Psoas muscle (tissue), 8 donors: ENCODE measurements at regions of chr16 and their contacts with region 1.

Region 1: GRCh38 chr16:10181196-10182162 is 749 bp downstream of the GRIN2A start:
- DNase-seq: peak; percentile 54 to 61
- ATAC-seq: peak; percentile 64 to 81 (median 72)
- H3K4me3 ChIP-seq: peak overlapping the region; percentile 35
- H3K27ac ChIP-seq: no peak overlapping the region
- H3K4me1 ChIP-seq: peaks cover 8% of the 10 kb centered on the region
- H3K27me3 ChIP-seq: peaks cover 0 to 66% (median 24%) of the 10 kb centered on the region in 3 donors
- CTCF ChIP-seq: peak; percentile 78

Region 2: DNA sequence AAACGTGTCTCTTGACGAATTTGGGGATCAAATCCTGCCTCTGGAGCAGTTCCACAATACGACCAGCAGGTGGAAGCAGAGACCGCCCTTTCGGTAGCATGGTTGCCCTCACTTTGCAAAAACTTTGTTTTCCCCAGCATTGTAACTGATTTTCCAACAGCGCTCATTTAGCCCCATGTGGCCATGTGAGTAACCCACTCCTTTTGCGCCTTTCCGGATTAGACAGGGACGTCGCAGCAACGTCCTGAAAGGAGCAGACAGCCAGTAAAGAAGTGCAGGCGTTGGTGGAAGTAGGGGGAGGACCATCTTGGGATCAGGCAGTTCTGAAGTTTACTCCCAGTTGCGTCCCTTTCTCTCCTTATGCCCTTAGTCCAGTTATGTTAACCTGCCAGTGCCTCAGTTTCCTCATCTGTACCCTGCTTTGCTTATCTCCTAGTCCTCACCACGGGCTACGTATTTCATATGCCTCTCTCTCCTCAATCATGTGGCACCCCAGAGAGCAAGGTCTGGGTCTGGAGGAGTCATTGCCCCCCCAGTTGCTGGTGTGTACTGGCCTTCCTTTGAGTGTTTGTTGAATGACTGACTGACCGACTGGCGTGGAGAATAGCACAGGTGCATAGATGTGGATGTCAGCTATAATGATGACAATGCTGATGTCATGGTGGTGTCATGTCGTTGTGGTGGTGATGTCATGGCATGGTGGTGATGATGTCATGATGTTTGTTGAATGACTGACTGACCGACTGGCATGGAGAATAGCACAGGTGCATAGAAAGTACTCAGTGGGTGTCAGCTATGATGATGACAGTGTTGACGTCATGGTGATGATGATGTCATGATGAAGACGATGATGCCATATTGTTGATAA is 1613.5 kb before region 1 on chr16:
- intact Hi-C with region 1: loop called in 1 of 2 experiments (anchors 10 kb)
- DNase-seq: peak; percentile 61 to 70
- ATAC-seq: peak; percentile 67 to 88 (median 84)
- H3K4me3 ChIP-seq: no peak overlapping the region
- H3K27ac ChIP-seq: no peak overlapping the region
- H3K4me1 ChIP-seq: no peaks in the 10 kb centered on the region
- H3K27me3 ChIP-seq: peaks cover 0 to 29% (median 5%) of the 10 kb centered on the region in 3 donors
- CTCF ChIP-seq: peak; percentile 96

Region 3: DNA sequence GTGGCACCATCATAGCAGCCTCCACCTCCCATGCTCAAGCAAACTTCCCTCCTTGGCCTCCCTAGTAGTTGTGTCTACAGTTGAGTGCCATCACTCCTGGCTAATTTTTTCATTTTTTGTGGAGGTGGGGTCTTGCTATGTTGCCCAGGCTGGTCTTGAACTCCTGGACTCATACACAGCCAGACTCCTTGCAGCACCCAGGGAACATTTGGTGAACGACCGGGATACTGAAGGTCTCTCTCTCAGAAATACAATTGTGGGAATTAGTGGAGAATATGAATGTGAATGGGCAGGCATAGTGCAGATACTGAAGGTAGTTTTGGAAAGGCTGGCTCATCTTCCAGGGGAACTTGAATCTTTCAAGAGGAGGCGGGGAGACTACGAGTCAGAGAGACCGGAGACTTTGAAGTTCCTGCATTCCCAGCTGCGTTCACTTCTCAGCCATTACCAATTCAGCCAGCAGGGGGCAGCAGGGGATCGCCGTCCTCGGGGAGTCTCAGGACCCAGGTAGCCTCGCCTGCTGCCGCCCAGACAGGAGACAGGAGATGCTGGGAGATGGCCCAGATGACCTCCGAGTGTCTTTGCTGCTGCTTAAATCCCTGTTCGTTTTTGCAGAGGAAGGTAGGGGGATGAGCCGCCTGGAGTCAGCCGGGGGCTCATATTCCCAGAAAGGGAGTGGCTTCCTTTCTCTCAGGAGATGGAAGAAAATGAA is 1021.5 kb before region 1 on chr16:
- intact Hi-C with region 1: loop called in 1 of 2 experiments (anchors 5 kb)
- DNase-seq: no peak
- ATAC-seq: peak in 1 of 4 donors; percentile 53
- H3K4me3 ChIP-seq: no peak overlapping the region
- H3K27ac ChIP-seq: no peak overlapping the region
- H3K4me1 ChIP-seq: no peaks in the 10 kb centered on the region
- H3K27me3 ChIP-seq: no peaks in the 10 kb centered on the region
- CTCF ChIP-seq: peak; percentile 67

Region 4: DNA sequence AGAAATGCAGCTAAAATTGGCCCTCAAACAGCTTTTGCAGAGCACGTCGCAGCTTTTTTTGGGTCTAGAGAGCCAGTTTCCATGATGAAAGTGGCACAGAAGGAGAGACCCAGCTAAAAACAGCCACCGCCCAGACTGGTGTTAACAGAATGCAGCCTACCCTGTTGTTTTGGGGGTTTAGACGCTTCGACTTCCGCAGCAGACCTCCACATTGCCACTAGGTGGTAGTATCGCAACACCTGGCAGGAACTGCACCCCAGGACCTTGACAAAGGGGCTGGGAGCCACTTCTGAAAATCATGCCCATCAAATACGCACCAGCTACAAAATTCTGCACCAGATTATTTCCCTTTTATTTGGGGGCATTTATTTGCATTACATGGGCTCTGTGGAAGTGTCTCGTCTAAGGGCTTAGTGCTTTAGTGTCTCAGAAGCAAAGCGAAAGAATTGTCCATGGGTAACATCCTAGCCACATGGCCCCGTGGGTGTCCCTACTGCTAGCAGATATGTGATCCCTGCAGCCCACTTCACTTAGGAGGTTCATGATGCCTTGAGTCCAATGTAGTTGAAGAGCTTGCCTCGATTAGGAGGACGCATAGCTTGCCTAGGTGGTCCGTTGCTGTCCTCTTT is 922.9 kb before region 1 on chr16:
- intact Hi-C with region 1: loop called (anchors 5 to 10 kb)
- DNase-seq: peak in 1 of 2 donors; percentile 16
- ATAC-seq: no peak
- H3K4me3 ChIP-seq: no peak overlapping the region
- H3K27ac ChIP-seq: no peak overlapping the region
- H3K4me1 ChIP-seq: no peaks in the 10 kb centered on the region
- H3K27me3 ChIP-seq: no peaks in the 10 kb centered on the region
- CTCF ChIP-seq: peak; percentile 38

Region 5: GRCh38 chr16:9647981-9648712 is 533.3 kb before region 1 on chr16:
- intact Hi-C with region 1: loop called in 1 of 2 experiments (anchors 5 kb)
- DNase-seq: no peak
- ATAC-seq: no peak
- H3K4me3 ChIP-seq: no peak overlapping the region
- H3K27ac ChIP-seq: no peak overlapping the region
- H3K4me1 ChIP-seq: no peaks in the 10 kb centered on the region
- H3K27me3 ChIP-seq: no peaks in the 10 kb centered on the region
- CTCF ChIP-seq: peak; percentile 53

Region 6: GRCh38 chr16:10093564-10093963 is 87.9 kb before region 1 on chr16:
- intact Hi-C with region 1: no loop called
- DNase-seq: no peak
- ATAC-seq: no peak
- H3K4me3 ChIP-seq: no peak overlapping the region
- H3K27ac ChIP-seq: no peak overlapping the region
- H3K4me1 ChIP-seq: no peaks in the 10 kb centered on the region
- H3K27me3 ChIP-seq: no peaks in the 10 kb centered on the region
- CTCF ChIP-seq: no peak